Posterior cingulate gyrus (tissue), 11 donors: ENCODE measurements at regions of chr17 and their contacts with region 1.

Region 1: GRCh38 chr17:4966844-4967538 is 626 bp downstream of the SPAG7 start:
- DNase-seq: peak; percentile 96 to 100 (median 99)

Region 2: DNA sequence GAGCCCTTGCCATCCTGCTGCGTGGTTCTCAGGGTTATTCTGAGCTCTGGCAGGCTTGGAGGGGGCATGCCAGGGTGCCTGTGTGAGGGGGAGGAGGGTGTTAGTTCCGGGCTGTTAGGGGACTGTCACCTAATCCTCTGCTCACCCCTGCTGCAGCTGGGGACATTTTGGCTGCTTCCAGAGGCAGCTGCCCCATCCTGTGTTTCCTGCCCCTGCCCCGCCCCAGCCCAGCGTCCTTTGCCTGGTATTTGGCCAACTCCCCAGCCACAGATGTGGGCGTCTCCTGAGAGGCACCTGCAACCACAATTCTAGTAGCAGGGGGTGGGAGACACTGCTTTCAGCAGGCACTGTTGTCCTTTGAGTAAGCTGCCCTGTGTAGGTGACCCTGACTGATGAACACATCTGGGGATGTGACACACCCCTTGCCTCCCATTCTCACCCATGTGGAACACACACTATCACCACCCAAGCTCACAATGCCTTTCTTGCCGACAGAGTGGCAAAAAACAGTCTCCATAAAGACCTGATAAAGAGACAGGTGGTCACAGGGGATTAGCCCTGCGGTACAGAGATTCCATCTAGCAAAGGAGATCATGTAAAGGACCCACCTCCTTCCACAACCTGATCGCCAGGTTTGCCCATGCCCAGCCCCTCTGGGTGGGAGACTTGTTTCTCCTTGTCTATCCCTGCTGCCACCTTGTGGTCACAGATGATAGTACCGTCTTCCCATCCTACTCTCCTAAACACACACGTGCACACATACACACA is 63.8 kb before region 1 on chr17 and contains the start of gene CHRNE:
- intact Hi-C with region 1: loop called (anchors 10 kb)
- DNase-seq: peak in 8 of 10 donors; percentile 36 to 87 (median 78)

Region 3: DNA sequence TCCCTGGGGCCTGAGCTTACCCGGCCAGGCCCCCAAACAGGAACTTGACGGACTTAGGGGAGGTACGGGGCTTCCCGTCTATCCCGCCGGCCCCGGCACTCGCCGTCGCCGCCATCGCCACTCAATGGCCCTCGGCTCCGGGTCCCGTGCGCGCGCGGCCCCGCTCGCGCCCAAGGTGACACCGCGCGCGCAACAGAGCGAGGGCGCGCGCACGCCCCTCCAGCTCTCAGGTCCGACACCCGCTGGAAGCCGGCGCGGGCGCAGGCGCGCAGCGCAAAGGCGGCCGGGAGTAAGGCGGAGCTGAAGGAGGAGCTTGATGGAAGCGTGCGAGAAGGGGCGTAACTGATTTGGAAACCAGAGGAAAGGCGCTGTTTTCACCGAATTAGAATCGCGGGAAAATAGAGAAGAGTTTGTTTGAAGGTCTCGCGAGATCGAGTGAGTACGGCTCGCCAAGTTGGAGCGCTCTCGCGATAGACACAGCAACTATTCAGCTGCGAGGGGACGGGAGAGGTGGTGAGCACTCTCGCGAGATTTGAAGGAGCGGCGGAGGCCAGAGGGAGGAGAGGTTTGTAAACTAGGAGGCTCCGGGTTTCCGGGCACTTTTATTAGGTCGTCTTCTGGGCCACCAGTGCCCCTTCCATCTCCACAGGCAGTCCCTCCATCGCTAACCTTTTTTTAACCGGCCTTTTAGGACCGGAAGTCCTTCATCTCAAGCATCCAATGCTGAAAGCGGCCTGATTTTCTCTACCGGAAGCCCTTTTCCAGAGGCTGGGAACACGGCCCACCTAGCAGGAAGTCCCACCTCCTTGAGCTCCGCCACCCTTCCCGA is 27.0 kb before region 1 on chr17 and contains the starts of genes RNF167 and SLC25A11:
- intact Hi-C with region 1: loop called (anchors 2 kb)
- DNase-seq: peak; percentile 90 to 99 (median 94)

Region 4: DNA sequence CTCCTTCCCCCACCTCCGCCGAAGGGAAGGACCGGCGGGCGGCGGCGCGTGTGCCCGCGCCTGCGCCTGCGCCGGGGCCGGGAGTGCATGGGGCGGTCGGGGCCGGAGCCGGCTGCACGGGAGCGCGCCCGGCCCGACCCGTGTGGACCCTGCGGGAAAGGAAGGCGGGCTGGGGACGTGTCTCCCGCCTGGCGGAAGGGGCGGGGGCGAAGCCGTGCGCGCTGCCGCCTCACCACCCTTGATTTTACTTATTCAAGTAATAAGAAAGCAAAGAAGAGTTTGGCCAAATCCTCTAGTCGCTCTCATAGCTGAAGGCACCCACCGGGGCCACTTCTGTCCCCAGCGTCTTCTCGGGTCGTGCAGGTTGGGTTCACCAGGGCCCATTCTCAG is 18.1 kb before region 1 on chr17:
- intact Hi-C with region 1: loop called (anchors 1 kb)
- DNase-seq: peak; percentile 55 to 96 (median 69)

Region 5: DNA sequence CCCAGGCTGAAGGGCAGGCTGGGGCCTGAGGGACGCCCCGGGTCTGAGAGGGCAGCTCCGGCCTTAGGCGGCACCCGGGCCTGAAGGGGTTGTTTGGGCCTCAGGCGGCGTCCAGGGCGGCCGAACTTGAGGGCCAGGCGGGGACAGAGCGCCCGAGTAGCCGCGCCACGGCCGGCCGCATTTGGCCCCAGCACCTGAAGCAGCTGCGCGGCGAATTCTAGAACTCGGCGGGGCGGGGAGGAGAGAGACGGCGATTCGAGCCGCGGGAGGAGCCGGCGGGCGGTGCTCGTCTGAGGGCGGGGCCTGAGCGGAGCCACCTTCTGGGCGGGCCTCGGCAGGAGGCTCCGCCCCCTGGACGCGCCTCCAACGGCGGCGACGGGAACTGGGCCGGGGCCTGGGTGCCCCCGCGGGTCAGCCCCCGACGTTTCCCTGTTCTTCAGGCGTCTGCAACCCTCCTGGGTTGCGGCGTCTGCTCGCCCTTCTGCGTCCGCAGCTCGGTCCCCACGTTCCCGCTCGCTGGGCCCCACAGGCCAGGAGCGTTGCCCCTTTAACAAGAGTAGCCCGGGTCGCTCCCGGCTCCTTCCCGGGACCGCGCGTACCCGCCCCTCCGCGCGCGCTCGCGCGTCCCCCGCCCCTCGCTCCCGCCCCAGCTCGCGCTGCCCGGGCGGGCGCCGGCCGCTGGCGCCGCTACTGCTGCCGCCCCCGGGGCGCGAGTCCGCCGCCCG is 30.5 kb after region 1 on chr17 and contains the starts of genes INCA1 and KIF1C:
- intact Hi-C with region 1: loop called (anchors 1 kb)
- DNase-seq: peak; percentile 87 to 99 (median 95)